CD8-positive, alpha-beta memory T cell (primary cell): ENCODE measurements at regions of chr16 and their contacts with region 1.

Region 1: DNA sequence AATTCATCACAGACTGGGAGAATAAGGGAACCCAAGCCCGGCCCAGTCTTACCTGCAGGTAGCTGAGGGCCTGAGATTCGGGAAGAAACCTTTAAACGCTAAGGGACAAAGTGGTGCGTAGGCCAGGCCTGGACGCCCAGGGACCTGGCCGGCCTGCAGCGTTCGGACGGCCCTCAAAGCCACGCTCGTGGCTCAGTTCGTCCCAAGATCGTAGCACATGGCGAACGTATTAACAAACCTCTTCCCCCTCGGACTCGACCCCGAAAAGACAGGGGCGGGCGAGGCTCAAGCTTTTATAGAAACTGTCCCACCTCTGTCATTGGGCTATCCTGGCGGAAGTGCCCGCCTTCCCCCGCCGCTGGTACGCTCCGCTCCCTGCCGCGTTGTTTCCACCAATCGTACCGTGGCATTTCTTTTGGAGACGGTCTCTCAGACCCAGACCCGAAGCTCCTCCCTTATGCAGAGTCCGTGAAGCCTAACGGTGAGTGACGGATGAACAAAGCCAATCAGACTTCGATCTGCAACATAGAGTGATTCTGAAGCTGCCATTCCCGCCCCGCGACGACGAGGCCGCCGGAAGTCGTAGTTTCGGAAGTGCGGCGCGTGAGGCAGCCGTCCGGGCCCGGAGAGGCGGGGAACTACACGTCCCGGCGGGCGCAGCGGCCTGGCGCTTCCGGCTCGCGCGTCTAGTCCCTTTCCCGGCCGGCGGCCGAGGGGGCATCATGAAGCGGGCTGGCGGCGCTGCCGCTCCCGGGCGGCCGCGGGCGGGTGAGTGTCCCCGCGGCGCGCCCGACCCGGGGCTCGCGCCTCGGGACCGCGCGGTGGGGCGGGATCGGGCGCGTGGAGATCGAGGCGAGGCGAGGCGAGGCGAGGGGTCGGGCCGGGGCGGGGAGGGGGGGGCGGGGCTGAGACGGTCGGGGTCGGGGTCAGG is at the start of gene TRAF7:
- DNase-seq: peak; percentile 94 to 99 (median 98)
- H3K4me3 ChIP-seq: peak within 1 kb of the TSS; percentile 100
- H3K4me3 Mint-ChIP-seq: peak within 1 kb of the TSS; percentile 91 to 95 (median 92)
- H3K27ac ChIP-seq: peak within 1 kb of the TSS; percentile 91
- H3K27ac Mint-ChIP-seq: peak within 1 kb of the TSS; percentile 73 to 96 (median 90)
- H3K4me1 ChIP-seq: peaks cover 59% of the 10 kb centered on the region
- H3K4me1 Mint-ChIP-seq: peaks cover 43 to 75% (median 44%) of the 10 kb centered on the region in 3 donors
- H3K27me3 ChIP-seq: no peaks in the 10 kb centered on the region
- H3K27me3 Mint-ChIP-seq: peaks cover 0 to 7% of the 10 kb centered on the region in 2 donors
- total RNA-seq, gene TRAF7: 102 to 106 TPM

Region 2: GRCh38 chr16:1964506-1965395 is 190.6 kb before region 1 on chr16 and contains the start of gene RPS2:
- CTCF ChIA-PET with region 1: interaction called, 4 read pairs
- POLR2A ChIA-PET with region 1: interaction called, 19 read pairs
- DNase-seq: peak; percentile 96 to 100 (median 98)
- H3K4me3 ChIP-seq: peak within 1 kb of the TSS; percentile 86
- H3K4me3 Mint-ChIP-seq: peak within 1 kb of the TSS; percentile 85 to 99 (median 94)
- H3K27ac ChIP-seq: peak within 1 kb of the TSS; percentile 93
- H3K27ac Mint-ChIP-seq: peak within 1 kb of the TSS; percentile 95 to 99 (median 98)
- H3K4me1 ChIP-seq: peaks cover 50% of the 10 kb centered on the region
- H3K4me1 Mint-ChIP-seq: peaks cover 43 to 52% (median 50%) of the 10 kb centered on the region in 3 donors
- H3K27me3 ChIP-seq: no peaks in the 10 kb centered on the region
- H3K27me3 Mint-ChIP-seq: peaks cover 0 to 1% of the 10 kb centered on the region in 2 donors
- total RNA-seq, gene RPS2: 5,023 to 5,213 TPM

Region 3: DNA sequence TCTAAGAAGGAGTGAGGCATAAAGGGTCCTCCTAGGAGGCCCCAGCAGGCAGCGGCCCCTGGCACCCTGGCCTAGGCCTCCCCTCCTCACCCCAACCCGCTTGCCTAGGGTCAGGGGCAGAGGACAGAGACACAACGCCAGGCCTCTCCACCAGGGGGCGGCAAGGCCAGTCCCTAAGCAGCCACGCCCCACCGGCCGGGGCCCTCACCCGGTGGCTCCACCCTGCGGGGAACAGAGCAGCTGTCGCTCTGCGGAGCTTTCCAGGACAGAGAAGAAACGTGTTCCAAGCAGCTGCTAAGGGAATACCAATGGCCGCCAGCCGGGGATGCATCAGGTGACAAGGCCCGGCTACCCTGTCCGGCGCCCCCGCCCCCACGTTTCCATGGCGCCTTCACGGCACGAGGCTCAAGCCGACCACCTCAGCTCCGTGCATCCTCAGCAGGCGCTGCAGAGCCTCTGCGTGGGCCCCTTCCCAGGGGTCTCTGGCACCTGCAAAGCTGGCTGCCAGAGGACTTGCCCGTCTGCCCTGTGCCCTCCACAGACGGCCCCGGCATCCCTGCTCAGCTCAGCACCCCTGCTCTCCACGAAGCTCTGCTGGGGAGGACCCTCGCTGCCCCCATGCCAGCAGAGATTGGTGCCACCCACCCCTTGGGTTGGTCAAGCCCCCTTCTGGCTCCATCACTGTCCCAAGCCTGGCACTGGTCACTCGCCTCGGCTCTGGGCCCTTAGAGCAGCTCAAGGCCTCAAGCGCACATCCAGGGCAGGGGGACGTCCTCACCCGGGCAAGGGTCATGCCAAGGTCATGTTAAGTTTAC is 151.3 kb before region 1 on chr16:
- CTCF ChIA-PET with region 1: interaction called, 15 read pairs
- POLR2A ChIA-PET with region 1: interaction called, 3 read pairs
- DNase-seq: peak; percentile 74 to 88 (median 79)
- H3K4me3 ChIP-seq: no peak overlapping the region
- H3K4me3 Mint-ChIP-seq: no peak overlapping the region
- H3K27ac ChIP-seq: peak overlapping the region; percentile 54
- H3K27ac Mint-ChIP-seq: peak overlapping the region in 1 of 8 donors; percentile 81
- H3K4me1 ChIP-seq: peaks cover 32% of the 10 kb centered on the region
- H3K4me1 Mint-ChIP-seq: peaks cover 20 to 54% (median 24%) of the 10 kb centered on the region in 3 donors
- H3K27me3 ChIP-seq: no peaks in the 10 kb centered on the region
- H3K27me3 Mint-ChIP-seq: no peaks in the 10 kb centered on the region

Region 4: GRCh38 chr16:2047330-2048115 is 107.8 kb before region 1 on chr16 and contains the starts of genes NTHL1 and TSC2:
- CTCF ChIA-PET with region 1: interaction called, 4 read pairs
- POLR2A ChIA-PET with region 1: interaction called, 14 read pairs
- DNase-seq: peak; percentile 88 to 93 (median 89)
- H3K4me3 ChIP-seq: peak within 1 kb of the TSS; percentile 67
- H3K4me3 Mint-ChIP-seq: peak within 1 kb of the TSS; percentile 90 to 94 (median 91)
- H3K27ac ChIP-seq: peak within 1 kb of the TSS; percentile 57
- H3K27ac Mint-ChIP-seq: peak within 1 kb of the TSS; percentile 29 to 92 (median 86)
- H3K4me1 ChIP-seq: peaks cover 14% of the 10 kb centered on the region
- H3K4me1 Mint-ChIP-seq: peaks cover 14 to 28% (median 16%) of the 10 kb centered on the region in 3 donors
- H3K27me3 ChIP-seq: no peaks in the 10 kb centered on the region
- H3K27me3 Mint-ChIP-seq: no peaks in the 10 kb centered on the region
- total RNA-seq, gene NTHL1: 28.7 to 29.5 TPM
- total RNA-seq, gene TSC2: 79.3 to 86.3 TPM

Region 5: GRCh38 chr16:2115591-2115973 is 39.8 kb before region 1 on chr16:
- CTCF ChIA-PET with region 1: no interaction called
- POLR2A ChIA-PET with region 1: no interaction called
- DNase-seq: no peak
- H3K4me3 ChIP-seq: no peak overlapping the region
- H3K4me3 Mint-ChIP-seq: no peak overlapping the region
- H3K27ac ChIP-seq: no peak overlapping the region
- H3K27ac Mint-ChIP-seq: no peak overlapping the region
- H3K4me1 ChIP-seq: no peaks in the 10 kb centered on the region
- H3K4me1 Mint-ChIP-seq: peaks cover 0 to 4% (median 3%) of the 10 kb centered on the region in 3 donors
- H3K27me3 ChIP-seq: no peaks in the 10 kb centered on the region
- H3K27me3 Mint-ChIP-seq: no peaks in the 10 kb centered on the region

Region 6: DNA sequence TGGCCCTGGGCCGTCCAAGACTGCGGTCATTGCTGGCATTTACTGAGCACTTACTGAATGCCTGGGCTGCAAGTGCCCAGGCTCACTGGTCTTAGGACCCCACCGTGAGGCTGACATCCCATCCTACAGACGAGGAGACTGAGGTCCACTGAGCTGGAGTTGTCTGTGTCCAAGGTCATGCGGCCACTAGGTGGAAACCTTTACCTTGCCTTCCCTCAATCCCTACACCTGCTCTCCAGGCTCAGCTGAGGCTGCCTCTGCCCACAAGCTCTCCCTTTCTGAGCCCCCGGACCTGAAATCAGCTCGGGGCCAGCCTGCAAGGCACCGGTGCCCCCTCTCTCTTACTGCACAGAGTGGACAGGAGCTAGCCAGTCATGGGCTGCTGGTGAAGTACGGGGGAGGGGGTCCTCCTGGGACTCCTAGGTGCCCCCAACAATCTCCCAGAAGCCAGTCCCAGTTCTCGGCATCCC is 39.5 kb after region 1 on chr16:
- CTCF ChIA-PET with region 1: no interaction called
- POLR2A ChIA-PET with region 1: no interaction called
- DNase-seq: peak in 4 of 5 donors; percentile 31 to 72 (median 48)
- H3K4me3 ChIP-seq: no peak overlapping the region
- H3K4me3 Mint-ChIP-seq: peak overlapping the region in 6 of 7 donors; percentile 44 to 83 (median 52)
- H3K27ac ChIP-seq: no peak overlapping the region
- H3K27ac Mint-ChIP-seq: peak overlapping the region in 1 of 8 donors; percentile 61
- H3K4me1 ChIP-seq: peaks cover 9% of the 10 kb centered on the region
- H3K4me1 Mint-ChIP-seq: peaks cover 0 to 13% (median 4%) of the 10 kb centered on the region in 3 donors
- H3K27me3 ChIP-seq: peaks cover 33% of the 10 kb centered on the region
- H3K27me3 Mint-ChIP-seq: peaks cover 27 to 30% of the 10 kb centered on the region in 2 donors

Region 7: GRCh38 chr16:2251483-2252240 is 96.3 kb after region 1 on chr16 and contains the start of gene ECI1:
- CTCF ChIA-PET with region 1: interaction called, 3 read pairs
- POLR2A ChIA-PET with region 1: interaction called, 12 read pairs
- DNase-seq: peak; percentile 65 to 84 (median 74)
- H3K4me3 ChIP-seq: peak within 1 kb of the TSS; percentile 65
- H3K4me3 Mint-ChIP-seq: peak within 1 kb of the TSS; percentile 84 to 94 (median 89)
- H3K27ac ChIP-seq: peak within 1 kb of the TSS; percentile 76
- H3K27ac Mint-ChIP-seq: peak within 1 kb of the TSS; percentile 87 to 96 (median 92)
- H3K4me1 ChIP-seq: peaks cover 8% of the 10 kb centered on the region
- H3K4me1 Mint-ChIP-seq: peaks cover 3 to 12% (median 8%) of the 10 kb centered on the region in 3 donors
- H3K27me3 ChIP-seq: no peaks in the 10 kb centered on the region
- H3K27me3 Mint-ChIP-seq: no peaks in the 10 kb centered on the region
- total RNA-seq, gene ECI1: 30.3 to 33.1 TPM

Region 8: GRCh38 chr16:3431779-3432219 is 1276.4 kb after region 1 on chr16:
- CTCF ChIA-PET with region 1: no interaction called
- POLR2A ChIA-PET with region 1: no interaction called
- DNase-seq: peak; percentile 2 to 69 (median 38)
- H3K4me3 ChIP-seq: peak overlapping the region; percentile 26
- H3K4me3 Mint-ChIP-seq: peak overlapping the region; percentile 20 to 90 (median 65)
- H3K27ac ChIP-seq: no peak overlapping the region
- H3K27ac Mint-ChIP-seq: peak overlapping the region; percentile 7 to 80 (median 60)
- H3K4me1 ChIP-seq: peaks cover 8% of the 10 kb centered on the region
- H3K4me1 Mint-ChIP-seq: peaks cover 13 to 27% (median 24%) of the 10 kb centered on the region in 3 donors
- H3K27me3 ChIP-seq: no peaks in the 10 kb centered on the region
- H3K27me3 Mint-ChIP-seq: peaks cover 2 to 3% of the 10 kb centered on the region in 2 donors